ENCODE measurements at regions of chr7 and their contacts with region 1.

Region 1: DNA sequence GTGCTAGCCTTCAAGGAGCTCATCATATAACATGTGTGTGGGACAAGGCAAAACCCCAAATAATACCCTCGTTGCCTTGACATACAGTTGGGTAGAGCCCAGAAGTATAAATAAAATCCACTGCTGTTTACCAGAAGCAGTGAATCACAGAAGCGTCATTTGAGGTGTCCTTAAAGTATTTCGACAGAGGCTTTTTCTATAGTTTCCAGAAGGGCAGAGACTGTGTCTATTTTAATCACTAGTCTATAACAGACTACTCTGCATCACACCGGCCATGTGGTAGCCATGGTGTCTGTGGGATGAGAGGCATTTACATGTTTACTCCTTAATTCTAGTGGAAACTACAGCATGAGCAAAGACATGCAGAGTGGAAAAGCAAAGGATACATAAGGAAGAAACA is 131.3 kb downstream of the CTTNBP2 start:
- DNase-seq: no peak
- ATAC-seq: no peak

Region 2: GRCh38 chr7:117424090-117424829 is 317.7 kb before region 1 on chr7:
- intact Hi-C with region 1: no loop called
- DNase-seq: no peak
- ATAC-seq: no peak

Region 3: DNA sequence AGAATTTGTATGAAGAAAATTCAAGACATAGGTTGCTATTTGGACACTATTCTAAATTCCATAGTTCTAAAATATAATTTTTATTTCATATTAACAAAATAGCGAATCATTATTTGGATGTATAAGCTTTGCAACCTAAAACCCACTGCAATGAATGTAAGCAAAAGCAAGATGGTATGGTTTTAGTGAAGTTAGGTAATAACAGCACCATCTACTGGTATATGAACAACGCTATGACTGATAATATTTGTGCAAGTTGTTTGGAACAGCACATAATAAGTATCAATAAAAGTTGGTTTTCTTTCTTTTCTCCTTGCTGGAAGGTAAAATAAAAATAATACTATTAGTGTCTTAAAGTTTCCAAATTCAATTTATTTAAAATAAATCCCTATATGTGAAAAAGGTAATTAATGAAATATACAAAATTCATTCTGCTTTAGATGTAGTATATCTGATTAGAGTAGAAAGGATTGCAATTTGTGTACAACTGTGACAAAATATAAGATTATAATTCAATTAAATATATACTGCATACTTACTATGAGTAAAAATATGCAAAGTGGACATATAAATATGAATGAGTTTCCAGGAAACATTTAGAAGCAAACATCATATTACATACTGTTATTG is 363.0 kb after region 1 on chr7:
- intact Hi-C with region 1: loop called (anchors 10 kb)
- DNase-seq: no peak
- ATAC-seq: no peak